IMR-90 (cell line): ENCODE measurements at regions of chr18 and their contacts with region 1.

Region 1: GRCh38 chr18:48711651-48712486 is 173.0 kb downstream of the CTIF start:
- DNase-seq: peak; percentile 49
- ATAC-seq: peak; percentile 55; the same call in 1 of the 2 replicates
- H3K4me3 ChIP-seq: no peak overlapping the region
- H3K27ac ChIP-seq: no peak overlapping the region
- H3K4me1 ChIP-seq: peaks cover 4% of the 10 kb centered on the region; the same call in 1 of the 2 replicates
- H3K27me3 ChIP-seq: no peaks in the 10 kb centered on the region
- CTCF ChIP-seq: peak; percentile 50
- POLR2A ChIP-seq: no peak
- RAD21 ChIP-seq: peak; percentile 71

Region 2: DNA sequence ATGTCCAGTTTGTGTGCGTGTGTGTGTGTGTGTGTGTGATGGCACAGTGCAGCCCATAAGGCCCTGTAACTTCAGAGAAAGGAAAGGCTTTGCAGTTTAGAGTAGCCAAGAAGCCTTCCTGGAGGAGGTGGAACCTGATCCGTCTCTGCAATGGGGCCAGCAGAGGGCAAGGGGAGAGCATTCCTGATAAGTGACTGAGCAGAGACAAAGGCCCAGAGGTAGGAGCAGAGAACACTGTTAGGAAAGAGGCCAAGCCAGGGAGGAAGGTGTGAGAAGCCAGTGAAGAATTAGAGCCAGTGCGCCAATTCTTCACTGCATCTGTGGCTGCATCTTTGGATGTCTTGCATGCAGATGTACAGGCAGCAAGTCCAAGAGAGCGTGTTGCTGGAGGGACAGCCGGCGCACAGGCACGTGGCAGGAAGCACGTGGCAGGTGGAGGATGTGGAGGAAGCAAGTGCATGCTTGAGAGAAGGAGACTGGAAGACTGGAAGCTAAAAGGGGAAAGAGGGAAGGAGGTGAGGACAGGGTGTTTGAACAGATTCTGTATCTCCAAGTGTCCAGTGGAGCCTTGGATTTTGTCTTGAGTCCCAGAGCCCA is 23.3 kb after region 1 on chr18:
- CTCF ChIA-PET with region 1: no interaction called
- POLR2A ChIA-PET with region 1: no interaction called
- dilution Hi-C with region 1: no loop called
- in situ Hi-C with region 1: no loop called
- intact Hi-C with region 1: no loop called
- DNase-seq: peak; percentile 44
- ATAC-seq: peak; percentile 56
- H3K4me3 ChIP-seq: no peak overlapping the region
- H3K27ac ChIP-seq: no peak overlapping the region
- H3K4me1 ChIP-seq: peaks cover 27% of the 10 kb centered on the region
- H3K27me3 ChIP-seq: no peaks in the 10 kb centered on the region
- CTCF ChIP-seq: no peak
- POLR2A ChIP-seq: no peak
- RAD21 ChIP-seq: no peak

Region 3: DNA sequence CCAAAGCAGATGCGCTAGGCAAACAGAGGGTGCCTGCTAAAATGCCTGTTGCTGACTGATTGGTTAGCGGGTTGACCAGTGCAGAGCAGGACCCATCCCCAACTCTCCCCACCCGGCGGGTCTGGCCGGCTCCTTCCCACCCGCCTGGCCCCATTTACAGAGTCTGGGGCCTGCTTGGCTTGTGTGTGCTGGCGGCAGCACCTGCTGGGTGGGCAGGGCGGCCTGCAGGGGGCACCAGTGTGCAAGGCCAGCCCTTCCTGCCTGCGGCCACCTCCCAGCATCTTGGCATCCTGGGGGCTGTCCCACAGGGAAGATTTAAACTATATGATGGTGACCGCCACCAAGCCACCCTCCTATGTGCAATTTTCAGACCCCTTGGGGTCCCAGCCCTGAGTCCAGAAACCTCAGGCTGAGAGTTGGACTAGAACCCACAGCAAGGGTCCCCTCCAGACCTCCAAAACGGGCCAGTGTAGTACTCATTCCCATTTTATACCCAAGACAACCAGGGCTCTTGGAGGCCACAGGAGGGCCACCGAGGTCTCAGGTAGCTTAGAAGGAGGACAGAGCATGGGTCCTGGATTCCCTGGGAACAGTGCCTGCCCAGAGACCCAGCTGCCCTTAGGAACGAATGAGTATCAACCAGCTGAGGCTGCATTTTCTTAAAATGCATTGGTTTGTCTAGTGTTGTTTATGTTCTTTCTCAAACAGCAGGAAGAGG is 65.3 kb after region 1 on chr18:
- CTCF ChIA-PET with region 1: no interaction called
- POLR2A ChIA-PET with region 1: no interaction called
- dilution Hi-C with region 1: no loop called
- in situ Hi-C with region 1: no loop called
- intact Hi-C with region 1: loop called (anchors 1 kb)
- DNase-seq: peak; percentile 20
- ATAC-seq: peak; percentile 50
- H3K4me3 ChIP-seq: no peak overlapping the region
- H3K27ac ChIP-seq: no peak overlapping the region
- H3K4me1 ChIP-seq: peaks cover 39% of the 10 kb centered on the region
- H3K27me3 ChIP-seq: no peaks in the 10 kb centered on the region
- CTCF ChIP-seq: peak; percentile 72
- POLR2A ChIP-seq: no peak
- RAD21 ChIP-seq: peak; percentile 78